ENCODE measurements at regions of chr15 and their contacts with region 1.

Region 1: DNA sequence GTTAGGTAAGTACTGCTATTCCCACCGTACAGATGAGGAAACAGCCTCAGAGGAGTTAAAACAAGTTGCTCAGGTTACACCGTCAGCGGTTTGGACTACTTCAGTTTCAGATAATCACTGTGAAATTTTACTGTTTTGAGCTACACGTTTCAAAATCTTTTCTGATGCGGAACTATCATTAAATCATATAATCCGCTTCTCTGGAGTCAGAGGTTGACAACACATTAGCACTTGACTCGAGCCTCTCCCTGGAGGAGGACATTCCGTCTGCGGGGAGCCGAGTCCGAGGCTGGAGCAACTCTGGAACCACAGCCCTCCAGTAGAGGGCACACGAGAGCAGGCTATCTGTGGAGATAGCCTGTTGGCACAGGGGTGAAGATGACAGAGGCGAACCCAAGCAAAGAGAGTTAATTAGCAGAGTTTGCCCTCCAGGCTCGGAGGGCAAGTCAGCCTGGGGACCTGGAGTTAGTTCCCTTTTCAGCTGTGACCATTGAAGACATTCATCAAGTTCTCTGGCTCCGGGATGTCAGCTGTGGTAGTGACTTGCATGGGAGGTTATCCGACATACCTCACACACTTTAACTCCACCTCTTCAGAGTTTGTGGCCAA is 131.2 kb downstream of the IGF1R start:
- DNase-seq: no peak
- H3K4me3 ChIP-seq: no peak overlapping the region
- CTCF ChIP-seq: peak; percentile 92

Region 2: GRCh38 chr15:98727115-98728085 is 52.2 kb before region 1 on chr15:
- CTCF ChIA-PET with region 1: interaction called, 10 read pairs
- POLR2A ChIA-PET with region 1: no interaction called
- DNase-seq: peak; percentile 65
- H3K4me3 ChIP-seq: peak overlapping the region; percentile 38
- CTCF ChIP-seq: no peak

Region 3: GRCh38 chr15:98760112-98760826 is 19.3 kb before region 1 on chr15:
- CTCF ChIA-PET with region 1: interaction called, 15 read pairs
- POLR2A ChIA-PET with region 1: no interaction called
- DNase-seq: no peak
- H3K4me3 ChIP-seq: no peak overlapping the region
- CTCF ChIP-seq: no peak

Region 4: DNA sequence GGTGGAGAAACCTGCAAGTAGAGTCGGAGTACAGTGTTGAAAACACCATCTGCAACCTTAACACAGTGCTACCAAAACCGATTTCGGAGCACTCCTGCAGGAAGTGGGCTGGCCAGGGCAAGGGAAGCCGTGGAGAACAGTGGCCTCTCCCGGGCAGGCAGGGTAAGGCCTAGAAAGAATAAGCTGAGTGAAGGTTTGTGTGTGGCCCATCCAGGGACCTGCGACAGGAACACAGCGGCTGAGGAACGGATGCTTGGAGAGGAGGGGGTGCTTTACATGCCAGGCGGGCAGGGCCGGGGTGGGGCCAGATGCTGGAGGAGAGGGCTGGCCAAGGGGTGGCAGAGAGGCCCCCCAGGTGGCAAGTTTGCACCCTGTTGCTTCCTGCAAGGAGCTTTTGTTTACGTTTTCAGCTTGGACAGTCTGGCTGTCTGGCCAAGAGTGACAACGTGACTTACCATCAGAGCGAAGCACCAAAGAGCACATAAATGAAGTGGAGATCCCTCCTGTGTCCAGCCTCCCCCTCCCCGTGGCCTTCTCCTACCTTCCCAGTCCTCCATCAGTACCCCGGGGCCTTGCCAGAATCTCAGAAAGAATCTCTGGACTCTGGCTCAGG is 71.5 kb after region 1 on chr15:
- CTCF ChIA-PET with region 1: interaction called, 10 read pairs
- POLR2A ChIA-PET with region 1: no interaction called
- DNase-seq: no peak
- H3K4me3 ChIP-seq: peak overlapping the region; percentile 64
- CTCF ChIP-seq: peak; percentile 83

Region 5: GRCh38 chr15:98904544-98904943 is 125.0 kb after region 1 on chr15:
- CTCF ChIA-PET with region 1: interaction called, 19 read pairs
- POLR2A ChIA-PET with region 1: no interaction called
- DNase-seq: no peak
- H3K4me3 ChIP-seq: no peak overlapping the region
- CTCF ChIP-seq: peak; percentile 71